Left cardiac atrium (tissue), 4 donors: ENCODE measurements at regions of chr2 and their contacts with region 1.

Region 1: DNA sequence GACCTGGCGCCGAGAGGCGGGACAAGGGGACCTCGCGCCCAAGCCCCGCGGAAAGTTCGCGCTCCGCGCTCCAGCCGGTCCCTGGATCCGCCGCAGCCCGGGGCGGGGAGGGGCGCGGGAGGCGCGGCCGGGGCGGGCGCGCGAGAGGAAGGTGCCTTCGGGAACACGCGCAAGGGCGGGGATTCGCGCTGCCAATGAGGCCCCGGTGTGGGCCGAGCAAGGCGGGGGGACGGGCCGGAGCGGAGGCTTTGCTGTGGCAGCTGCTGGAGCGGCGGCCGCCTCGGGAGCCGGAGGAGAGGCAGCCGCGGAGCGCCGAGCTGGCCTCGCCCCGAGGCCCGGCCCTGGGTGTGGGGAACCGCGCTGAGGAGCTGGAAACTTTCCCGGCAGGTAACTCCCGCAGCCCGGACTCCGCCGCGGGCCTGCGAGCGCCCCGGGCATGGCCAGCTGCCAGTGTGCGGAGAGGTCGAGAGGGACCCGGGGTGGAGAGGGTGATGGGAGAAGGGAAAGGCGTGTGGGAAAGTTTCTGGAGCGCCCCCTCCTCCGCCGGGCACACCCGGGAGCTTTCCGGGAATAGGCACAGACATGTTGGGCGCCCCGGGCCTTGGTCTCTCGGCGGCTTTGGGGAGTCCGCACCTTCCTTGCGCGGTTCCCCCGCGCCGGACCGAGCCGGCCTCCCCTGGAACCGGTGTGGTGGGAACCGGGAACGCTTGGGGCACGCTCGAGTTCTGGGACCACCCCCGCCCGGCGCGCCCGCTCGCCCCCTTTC is at the start of gene TANC1:
- DNase-seq: peak; percentile 96
- ATAC-seq: peak; percentile 96 to 97
- total RNA-seq, gene TANC1: 38.6 to 80.7 TPM

Region 2: GRCh38 chr2:158443612-158444011 is 525.0 kb before region 1 on chr2:
- intact Hi-C with region 1: no loop called
- DNase-seq: no peak
- ATAC-seq: no peak

Region 3: GRCh38 chr2:158559252-158559651 is 409.3 kb before region 1 on chr2:
- intact Hi-C with region 1: no loop called
- DNase-seq: no peak
- ATAC-seq: no peak

Region 4: DNA sequence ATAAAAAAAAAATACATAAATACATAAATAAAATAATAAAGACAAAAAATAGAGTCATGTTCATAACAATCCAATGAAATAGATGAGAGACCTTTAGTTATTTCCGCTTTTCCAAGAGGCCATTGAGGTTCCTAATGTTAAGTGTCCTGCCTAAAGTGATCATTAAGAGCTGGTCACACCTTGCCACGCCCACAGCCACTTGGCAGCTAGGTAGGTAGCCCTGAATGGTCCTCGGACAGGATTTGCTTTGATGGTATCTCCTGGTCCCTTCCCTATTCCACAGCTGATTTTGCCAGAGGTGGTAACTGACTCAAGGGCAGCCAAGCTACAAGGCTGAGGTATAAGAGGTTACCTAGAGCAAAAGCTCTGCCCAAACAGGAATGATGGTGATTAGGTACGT is 24.6 kb before region 1 on chr2:
- intact Hi-C with region 1: no loop called
- DNase-seq: no peak
- ATAC-seq: no peak

Region 5: GRCh38 chr2:159118115-159118858 is 149.7 kb after region 1 on chr2:
- intact Hi-C with region 1: loop called (anchors 5 kb)
- DNase-seq: peak; percentile 89
- ATAC-seq: peak; percentile 88 to 90

Region 6: DNA sequence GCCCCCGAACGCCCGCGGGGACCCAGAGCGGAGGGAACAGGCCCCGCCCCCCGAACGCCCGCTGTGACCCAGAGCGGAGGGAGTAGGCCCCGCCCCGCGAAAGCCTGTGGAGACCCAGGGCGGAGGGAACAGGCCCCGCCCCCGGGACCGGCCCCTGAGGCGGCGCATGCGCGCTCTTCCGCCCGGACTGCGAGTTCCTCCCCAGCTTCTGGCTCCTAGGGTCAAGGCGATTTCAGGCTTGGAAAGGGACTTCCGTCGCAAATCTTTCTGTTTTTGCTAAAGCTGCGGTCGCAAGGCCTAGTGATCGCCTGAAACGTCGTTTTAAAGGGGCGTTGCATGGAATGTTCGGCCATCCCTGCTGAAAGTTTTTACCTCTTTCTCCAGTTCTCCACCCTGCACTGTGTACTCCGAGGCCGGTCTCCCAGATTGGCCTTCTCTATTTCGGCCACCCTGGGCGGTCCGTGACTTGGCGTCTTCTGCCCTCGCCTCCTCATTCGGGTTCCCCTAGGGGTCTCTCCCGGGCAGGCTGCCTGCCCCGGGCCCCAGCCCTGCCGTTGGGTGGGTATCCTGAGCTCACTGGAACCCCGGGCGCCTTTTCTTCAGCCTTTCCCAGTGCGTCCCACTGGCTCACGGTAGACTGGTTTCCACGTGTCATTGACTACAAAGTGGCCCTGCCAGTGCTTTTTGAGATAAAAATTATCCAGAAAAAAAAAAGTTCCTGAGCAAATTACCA is 318.3 kb after region 1 on chr2:
- intact Hi-C with region 1: no loop called
- DNase-seq: peak; percentile 99
- ATAC-seq: peak; percentile 99